ENCODE measurements at regions of chr9 and their contacts with region 1.

Region 1: DNA sequence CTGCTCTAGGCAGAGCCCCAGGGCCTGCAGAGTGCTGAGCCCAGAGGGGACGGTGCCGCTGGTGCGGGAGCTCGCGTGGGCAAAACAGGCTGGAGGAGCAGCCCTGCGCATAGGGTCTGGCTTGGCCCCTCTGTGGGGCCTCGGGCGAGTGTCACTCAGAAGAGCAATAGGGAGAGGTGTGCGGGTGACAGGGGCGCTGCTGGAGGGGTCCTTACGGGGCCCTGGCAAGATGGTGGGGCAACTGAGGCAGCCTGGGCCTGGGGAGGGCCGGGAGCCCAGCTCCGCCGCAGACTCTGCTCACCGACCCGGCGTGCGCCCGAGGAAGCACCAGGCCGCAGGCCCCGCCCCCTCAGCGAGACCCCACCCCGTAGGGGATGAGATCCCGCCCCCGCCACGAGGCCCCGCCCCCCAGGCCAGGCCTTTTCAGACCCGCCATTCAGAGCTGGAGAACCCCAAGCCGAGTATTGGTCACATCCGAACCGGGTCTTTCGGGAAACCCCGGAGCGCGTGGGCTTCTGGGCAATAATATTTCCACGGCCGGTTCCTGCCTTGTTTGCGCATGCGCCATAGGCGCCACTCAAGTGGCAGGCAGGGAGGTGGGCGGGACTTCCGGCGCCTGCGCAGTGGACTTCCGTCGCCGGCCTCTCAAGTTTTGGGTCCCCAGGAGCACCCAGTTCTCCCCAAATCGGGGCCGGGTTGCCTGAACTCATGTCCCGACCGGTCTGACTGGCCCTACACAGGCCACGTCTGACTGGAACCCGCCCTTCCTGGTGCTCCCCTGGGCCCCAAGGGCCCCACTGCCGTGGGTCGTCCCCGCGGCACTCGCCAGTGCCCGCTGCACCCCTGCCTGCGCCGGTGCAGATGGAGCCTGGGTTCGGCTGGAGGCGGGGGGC is 1.3 kb upstream of the RNF208 start:
- DNase-seq: peak; percentile 93
- H3K4me3 ChIP-seq: peak overlapping the region; percentile 86
- H3K27me3 ChIP-seq: no peaks in the 10 kb centered on the region
- CTCF ChIP-seq: no peak

Region 2: GRCh38 chr9:137046098-137046787 is 177.1 kb before region 1 on chr9 and contains the start of gene NPDC1:
- CTCF ChIA-PET with region 1: interaction called, 15 read pairs
- POLR2A ChIA-PET with region 1: no interaction called
- DNase-seq: no peak
- H3K4me3 ChIP-seq: peak within 1 kb of the TSS; percentile 55
- H3K27me3 ChIP-seq: peaks cover 7% of the 10 kb centered on the region; the same call in 1 of the 2 replicates
- CTCF ChIP-seq: peak; percentile 95
- polyA plus RNA-seq, gene NPDC1: 21.8 and 31.9 TPM in 2 replicates

Region 3: DNA sequence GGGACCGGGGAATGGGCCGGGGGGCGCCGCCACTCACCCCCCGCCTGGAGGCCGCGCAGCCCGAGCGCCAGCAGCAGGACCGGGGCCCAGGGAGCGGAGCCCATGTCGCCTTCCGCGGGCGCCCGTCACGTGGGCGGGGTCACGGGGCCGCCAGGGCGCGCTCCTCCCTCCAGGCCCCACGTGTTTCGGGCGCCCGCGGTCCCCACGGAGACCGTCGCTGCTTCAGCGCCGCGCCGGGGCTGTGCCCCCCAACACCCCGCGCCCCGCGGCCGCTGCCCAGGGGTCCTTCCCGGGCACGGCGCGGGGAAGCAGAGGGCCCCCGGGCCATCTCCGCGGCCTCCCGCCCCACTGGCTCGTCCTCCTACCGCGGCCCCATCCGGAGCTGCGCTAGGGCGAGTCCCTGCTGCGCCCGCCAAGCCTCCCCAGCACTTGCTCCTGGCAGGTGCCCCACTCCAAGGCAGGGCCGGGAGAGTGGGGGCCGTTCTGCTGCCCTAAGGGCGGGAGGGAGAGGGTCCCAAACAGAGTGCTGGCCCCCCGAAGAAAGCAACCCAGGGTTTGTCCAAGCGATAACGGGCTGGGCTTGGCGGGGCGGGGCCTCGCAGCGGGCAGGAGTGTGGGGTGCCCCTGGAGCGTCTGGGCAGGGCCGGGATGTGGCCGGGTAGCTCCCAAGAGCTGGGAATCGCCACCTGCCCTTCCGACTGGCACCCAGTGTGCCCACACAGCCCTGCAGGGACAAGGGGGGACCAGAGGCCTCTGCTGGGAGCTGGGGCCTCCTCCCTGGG is 108.5 kb before region 1 on chr9 and contains the start of gene DPP7:
- CTCF ChIA-PET with region 1: interaction called, 37 read pairs
- POLR2A ChIA-PET with region 1: no interaction called
- DNase-seq: no peak
- H3K4me3 ChIP-seq: peak within 1 kb of the TSS; percentile 66
- H3K27me3 ChIP-seq: no peaks in the 10 kb centered on the region
- CTCF ChIP-seq: no peak
- polyA plus RNA-seq, gene DPP7: 66.7 and 94.4 TPM in 2 replicates

Region 4: GRCh38 chr9:137129456-137130175 is 93.7 kb before region 1 on chr9:
- CTCF ChIA-PET with region 1: interaction called, 11 read pairs
- POLR2A ChIA-PET with region 1: interaction called, 3 read pairs
- DNase-seq: peak; percentile 54
- H3K4me3 ChIP-seq: peak overlapping the region; percentile 63
- H3K27me3 ChIP-seq: no peaks in the 10 kb centered on the region
- CTCF ChIP-seq: no peak

Region 5: GRCh38 chr9:137240861-137241489 is 17.7 kb after region 1 on chr9 and contains the start of gene TUBB4B:
- CTCF ChIA-PET with region 1: interaction called, 36 read pairs
- POLR2A ChIA-PET with region 1: no interaction called
- DNase-seq: peak; percentile 99
- H3K4me3 ChIP-seq: peak within 1 kb of the TSS; percentile 97
- H3K27me3 ChIP-seq: no peaks in the 10 kb centered on the region
- CTCF ChIP-seq: no peak
- polyA plus RNA-seq, gene TUBB4B: 263 and 385 TPM in 2 replicates

Region 6: GRCh38 chr9:137277329-137278041 is 54.2 kb after region 1 on chr9 and contains the start of gene TOR4A:
- CTCF ChIA-PET with region 1: no interaction called
- POLR2A ChIA-PET with region 1: no interaction called
- DNase-seq: peak; percentile 31
- H3K4me3 ChIP-seq: peak within 1 kb of the TSS; percentile 88
- H3K27me3 ChIP-seq: no peaks in the 10 kb centered on the region
- CTCF ChIP-seq: peak; percentile 57
- polyA plus RNA-seq, gene TOR4A: 16.9 and 23.8 TPM in 2 replicates